Ascending aorta (tissue), 2 donors: ENCODE measurements at regions of chr12 and their contacts with region 1.

Region 1: DNA sequence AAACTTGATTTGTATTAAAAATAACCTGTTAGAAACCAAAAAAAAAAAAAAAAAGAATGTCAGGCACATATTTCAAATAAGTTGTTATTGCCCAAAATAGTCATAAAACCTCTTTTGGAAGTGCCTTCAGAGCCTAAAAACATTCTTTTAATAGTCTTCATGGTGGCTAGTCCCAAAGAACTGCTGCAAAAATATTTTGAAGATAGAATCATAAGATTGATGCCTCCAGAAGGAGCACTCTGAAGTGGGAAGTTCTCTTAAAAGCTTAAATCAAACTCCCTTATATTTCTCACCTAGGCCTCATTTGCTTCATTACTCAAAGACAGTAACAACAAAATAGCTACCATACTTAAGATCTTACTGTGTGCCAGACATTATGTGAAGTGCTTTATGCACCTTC is 27.2 kb upstream of the NT5DC3 start:
- DNase-seq: no peak
- H3K4me3 ChIP-seq: no peak overlapping the region
- H3K27ac ChIP-seq: peak overlapping the region; percentile 67 to 93
- H3K4me1 ChIP-seq: peaks cover 0 to 17% of the 10 kb centered on the region in 2 donors
- H3K27me3 ChIP-seq: no peaks in the 10 kb centered on the region
- CTCF ChIP-seq: no peak

Region 2: DNA sequence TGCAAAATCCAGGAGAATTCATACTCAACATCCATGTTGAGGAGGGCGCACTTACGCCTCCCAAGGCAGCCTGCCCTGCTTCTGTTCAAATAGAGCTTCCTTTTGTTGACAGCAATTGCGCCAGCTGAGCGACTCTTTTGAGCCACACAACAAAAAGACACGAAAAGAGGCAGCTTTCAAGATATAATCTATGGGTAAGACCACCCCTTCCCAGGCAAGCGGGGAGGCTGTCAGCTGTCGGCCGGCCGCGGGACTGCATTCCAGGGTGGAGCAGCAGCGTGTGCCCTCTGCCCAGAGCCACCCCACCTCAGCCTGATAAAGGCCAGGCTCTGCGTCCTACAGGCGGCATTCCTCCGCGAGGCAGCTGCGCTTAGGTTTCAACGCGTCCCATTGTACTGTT is 296.9 kb before region 1 on chr12:
- intact Hi-C with region 1: loop called (anchors 1 kb)
- DNase-seq: no peak
- H3K4me3 ChIP-seq: no peak overlapping the region
- H3K27ac ChIP-seq: no peak overlapping the region
- H3K4me1 ChIP-seq: no peaks in the 10 kb centered on the region
- H3K27me3 ChIP-seq: no peaks in the 10 kb centered on the region
- CTCF ChIP-seq: no peak

Region 3: GRCh38 chr12:103758310-103759089 is 109.7 kb before region 1 on chr12:
- intact Hi-C with region 1: no loop called
- DNase-seq: no peak
- H3K4me3 ChIP-seq: no peak overlapping the region
- H3K27ac ChIP-seq: no peak overlapping the region
- H3K4me1 ChIP-seq: no peaks in the 10 kb centered on the region
- H3K27me3 ChIP-seq: no peaks in the 10 kb centered on the region
- CTCF ChIP-seq: no peak

Region 4: DNA sequence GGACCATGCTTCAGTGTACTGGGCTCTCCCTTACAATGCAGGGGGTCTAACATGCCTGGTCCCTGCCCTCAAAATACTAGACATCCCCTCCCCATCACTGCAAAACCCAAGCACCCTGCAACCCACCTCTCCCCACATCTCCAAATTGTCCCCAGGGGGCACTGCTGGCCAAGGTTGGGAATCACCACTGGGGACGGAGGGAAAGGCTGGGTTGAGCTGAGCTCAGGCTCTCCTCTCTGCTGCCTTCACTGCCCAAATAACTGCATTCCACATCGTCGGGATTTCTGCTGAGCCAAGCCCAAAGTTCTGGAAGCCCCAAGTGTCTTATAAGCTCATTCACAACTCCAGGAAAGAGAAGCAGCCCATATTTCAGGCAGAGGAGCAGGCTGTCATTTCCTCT is 96.7 kb before region 1 on chr12:
- intact Hi-C with region 1: loop called (anchors 2 kb)
- DNase-seq: no peak
- H3K4me3 ChIP-seq: no peak overlapping the region
- H3K27ac ChIP-seq: peak overlapping the region in 1 of 2 donors; percentile 24
- H3K4me1 ChIP-seq: peaks cover 5 to 13% of the 10 kb centered on the region in 2 donors
- H3K27me3 ChIP-seq: no peaks in the 10 kb centered on the region
- CTCF ChIP-seq: peak in 1 of 3 experiments; percentile 50

Region 5: GRCh38 chr12:103806803-103807202 is 61.4 kb before region 1 on chr12:
- intact Hi-C with region 1: loop called (anchors 5 kb)
- DNase-seq: no peak
- H3K4me3 ChIP-seq: no peak overlapping the region
- H3K27ac ChIP-seq: peak overlapping the region; percentile 79 to 86
- H3K4me1 ChIP-seq: peaks cover 7 to 58% of the 10 kb centered on the region in 2 donors
- H3K27me3 ChIP-seq: no peaks in the 10 kb centered on the region
- CTCF ChIP-seq: no peak

Region 6: DNA sequence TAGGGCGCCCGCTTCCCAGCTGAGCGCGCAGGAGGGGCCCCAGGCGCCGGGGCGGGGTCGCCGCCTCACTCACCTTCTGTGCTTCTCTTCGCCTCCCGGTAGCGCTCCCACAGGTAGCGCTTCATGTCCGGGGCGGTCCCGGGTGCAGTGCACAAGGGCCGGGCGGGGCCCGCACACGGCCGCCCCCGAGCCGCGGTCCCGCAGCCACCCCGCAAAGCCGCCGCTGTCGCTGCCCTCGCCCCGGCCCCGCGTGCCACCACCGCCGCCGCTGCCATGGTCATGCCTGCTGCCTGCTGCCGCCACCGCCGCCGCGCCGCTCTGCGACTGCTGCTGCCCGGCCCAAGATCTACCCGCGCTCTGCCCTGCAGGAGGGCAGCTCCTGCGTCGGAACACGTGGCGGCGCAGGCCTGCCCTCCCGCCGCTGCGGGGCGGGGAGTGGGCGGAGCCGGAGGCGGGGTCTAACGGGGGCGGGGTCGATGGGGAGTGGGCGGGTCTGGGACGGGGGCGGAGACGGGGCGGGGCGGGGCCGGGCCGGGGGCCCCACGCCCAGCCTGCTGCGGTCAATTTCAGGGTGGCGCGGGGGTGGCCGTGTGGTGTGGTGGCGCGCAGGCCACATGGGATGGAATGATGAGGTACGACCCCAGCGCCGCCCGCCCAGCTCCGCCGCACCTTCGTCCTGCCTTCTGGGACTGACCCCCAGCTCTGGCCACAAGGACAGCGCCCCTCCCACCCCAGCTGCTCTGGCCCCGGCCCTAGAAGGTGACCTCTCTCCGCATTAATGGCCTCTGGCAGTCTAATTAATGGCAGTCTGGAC is 27.1 kb before region 1 on chr12 and contains the start of gene NT5DC3:
- intact Hi-C with region 1: loop called (anchors 2 kb)
- DNase-seq: peak; percentile 23 to 85
- H3K4me3 ChIP-seq: peak within 1 kb of the TSS; percentile 95 to 96
- H3K27ac ChIP-seq: peak within 1 kb of the TSS; percentile 93 to 94
- H3K4me1 ChIP-seq: peaks cover 0 to 3% of the 10 kb centered on the region in 2 donors
- H3K27me3 ChIP-seq: no peaks in the 10 kb centered on the region
- CTCF ChIP-seq: no peak
- total RNA-seq, gene NT5DC3: 6.6 TPM